PC-9 (cell line): ENCODE measurements at regions of chr7 and their contacts with region 1.

Region 1: DNA sequence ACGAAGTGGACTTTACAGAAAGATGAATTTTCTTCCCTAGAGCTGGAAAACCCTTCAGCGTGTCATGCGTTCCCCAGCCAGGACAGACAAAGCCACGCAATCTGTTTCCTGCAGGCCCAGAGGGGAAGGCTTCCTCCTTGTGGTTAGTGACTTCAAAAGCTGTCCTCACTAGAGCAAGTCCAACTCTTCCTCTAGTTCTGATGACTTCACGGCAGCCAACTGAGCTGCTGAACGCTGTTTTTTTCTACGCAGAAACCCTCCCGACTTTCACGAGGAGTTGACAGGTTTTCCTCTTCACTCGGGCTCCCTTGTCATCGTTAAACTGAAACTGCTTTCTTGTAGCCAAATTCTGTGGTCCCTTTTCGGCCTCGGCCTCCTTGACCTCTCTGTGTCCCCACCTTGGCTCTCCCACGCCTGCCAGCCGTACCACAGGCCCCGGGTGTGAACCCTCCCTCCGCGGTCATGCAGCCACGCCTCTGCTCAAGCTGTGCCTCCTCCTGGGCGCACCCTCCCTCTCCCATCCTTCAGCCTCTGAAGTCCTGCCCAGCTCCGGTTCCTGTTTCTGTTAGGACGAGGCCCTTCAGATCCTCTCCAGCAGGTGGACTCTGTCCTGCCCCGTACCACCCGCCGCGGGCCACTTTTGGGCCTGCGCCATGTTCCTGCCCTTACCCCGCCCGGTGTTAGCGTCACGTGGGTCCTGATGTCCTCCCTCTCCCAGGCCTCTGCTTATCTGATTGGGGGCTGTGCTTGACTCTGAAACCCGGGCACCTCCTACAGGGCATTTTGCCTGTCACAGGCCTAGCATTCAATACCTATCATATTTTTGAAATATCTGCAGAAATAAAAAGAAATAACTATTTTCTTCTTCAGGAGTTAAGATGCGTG is 39.3 kb downstream of the CUX1 start:
- DNase-seq: peak; percentile 91 to 98
- H3K4me3 ChIP-seq: peak overlapping the region; percentile 46
- H3K27ac ChIP-seq: peak overlapping the region; percentile 76
- H3K4me1 ChIP-seq: peaks cover 18% of the 10 kb centered on the region
- H3K27me3 ChIP-seq: no peaks in the 10 kb centered on the region
- CTCF ChIP-seq: peak; percentile 73

Region 2: GRCh38 chr7:101688183-101688831 is 168.4 kb before region 1 on chr7:
- CTCF ChIA-PET with region 1: no interaction called
- POLR2A ChIA-PET with region 1: interaction called, 3 read pairs
- intact Hi-C with region 1: loop called (anchors 5 kb)
- DNase-seq: peak in 1 of 2 experiments; percentile 79
- H3K4me3 ChIP-seq: peak overlapping the region; percentile 38; the same call in 1 of the 2 replicates
- H3K27ac ChIP-seq: no peak overlapping the region
- H3K4me1 ChIP-seq: peaks cover 4% of the 10 kb centered on the region
- H3K27me3 ChIP-seq: no peaks in the 10 kb centered on the region
- CTCF ChIP-seq: peak; percentile 96

Region 3: GRCh38 chr7:101815835-101816493 is 40.8 kb before region 1 on chr7:
- CTCF ChIA-PET with region 1: no interaction called
- POLR2A ChIA-PET with region 1: no interaction called
- intact Hi-C with region 1: loop called (anchors 1 kb)
- DNase-seq: peak; percentile 61 to 76
- H3K4me3 ChIP-seq: peak overlapping the region; percentile 51; the same call in 1 of the 2 replicates
- H3K27ac ChIP-seq: no peak overlapping the region
- H3K4me1 ChIP-seq: peaks cover 15% of the 10 kb centered on the region
- H3K27me3 ChIP-seq: no peaks in the 10 kb centered on the region
- CTCF ChIP-seq: no peak

Region 4: GRCh38 chr7:101882595-101883564 is 26.2 kb after region 1 on chr7:
- CTCF ChIA-PET with region 1: no interaction called
- POLR2A ChIA-PET with region 1: interaction called, 9 read pairs
- intact Hi-C with region 1: loop called (anchors 1 kb)
- DNase-seq: peak; percentile 93 to 99
- H3K4me3 ChIP-seq: peak overlapping the region; percentile 39; the same call in 1 of the 2 replicates
- H3K27ac ChIP-seq: peak overlapping the region; percentile 99
- H3K4me1 ChIP-seq: peaks cover 53% of the 10 kb centered on the region
- H3K27me3 ChIP-seq: no peaks in the 10 kb centered on the region
- CTCF ChIP-seq: no peak

Region 5: DNA sequence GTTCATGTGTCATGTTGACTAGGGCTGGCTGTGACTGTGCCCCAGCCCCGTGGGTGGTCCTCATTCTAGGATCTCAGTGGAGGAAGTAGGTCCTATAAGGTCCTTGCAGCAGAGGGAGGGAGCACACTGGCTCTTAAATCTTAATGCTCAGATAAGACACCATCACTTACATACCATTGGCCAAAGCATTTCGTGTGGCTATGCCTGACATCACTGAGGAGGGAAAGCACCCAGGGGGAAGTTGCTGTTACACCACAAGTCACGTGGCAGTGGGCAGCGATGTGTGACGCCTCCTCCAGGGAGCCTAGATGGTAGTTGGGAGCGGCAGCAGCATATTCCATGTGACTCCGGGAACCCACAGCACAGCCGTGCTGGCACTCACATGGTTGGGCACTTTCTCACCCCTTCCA is 205.3 kb after region 1 on chr7:
- CTCF ChIA-PET with region 1: no interaction called
- POLR2A ChIA-PET with region 1: no interaction called
- intact Hi-C with region 1: loop called (anchors 5 kb)
- DNase-seq: no peak
- H3K4me3 ChIP-seq: no peak overlapping the region
- H3K27ac ChIP-seq: no peak overlapping the region
- H3K4me1 ChIP-seq: peaks cover 11% of the 10 kb centered on the region
- H3K27me3 ChIP-seq: no peaks in the 10 kb centered on the region
- CTCF ChIP-seq: no peak

Region 6: DNA sequence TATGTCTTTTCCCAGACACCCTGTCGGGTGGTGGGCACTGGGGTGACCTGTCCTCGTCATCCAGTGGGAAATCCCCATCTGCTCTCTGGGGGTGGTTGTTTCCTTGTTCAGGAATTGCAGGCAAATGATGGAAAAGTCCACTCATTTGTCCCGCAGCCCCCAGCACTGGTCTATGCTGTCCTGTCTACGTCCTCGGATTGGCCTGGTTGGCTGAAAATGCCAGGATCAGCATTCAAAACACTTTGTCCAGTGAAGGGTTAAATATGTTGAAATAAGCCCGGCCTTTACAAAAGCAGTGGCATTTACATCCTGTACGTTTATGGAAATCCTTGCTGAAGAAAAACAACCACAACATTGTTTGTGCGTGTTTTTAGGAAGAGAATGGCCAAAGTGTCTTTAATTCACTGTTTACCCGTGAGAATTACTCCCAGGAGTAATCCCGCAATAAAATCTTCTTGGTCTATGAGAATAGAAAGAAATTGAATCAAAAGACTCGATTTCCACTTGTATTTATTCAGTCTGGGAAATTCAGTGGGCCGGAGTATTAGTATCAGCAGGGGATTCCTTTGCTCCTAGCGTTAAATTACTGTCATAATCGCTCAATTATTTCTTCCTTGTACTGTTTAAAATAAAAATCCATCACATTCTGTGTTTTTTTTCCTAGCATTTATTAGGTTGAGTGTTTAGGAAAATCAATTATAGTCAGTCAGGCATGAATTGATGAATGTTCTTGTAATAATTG is 313.1 kb after region 1 on chr7:
- CTCF ChIA-PET with region 1: no interaction called
- POLR2A ChIA-PET with region 1: interaction called, 22 read pairs
- intact Hi-C with region 1: no loop called
- DNase-seq: no peak
- H3K4me3 ChIP-seq: no peak overlapping the region
- H3K27ac ChIP-seq: no peak overlapping the region
- H3K4me1 ChIP-seq: no peaks in the 10 kb centered on the region
- H3K27me3 ChIP-seq: no peaks in the 10 kb centered on the region
- CTCF ChIP-seq: no peak